ENCODE measurements at regions of chr18 and their contacts with region 1.

Region 1: DNA sequence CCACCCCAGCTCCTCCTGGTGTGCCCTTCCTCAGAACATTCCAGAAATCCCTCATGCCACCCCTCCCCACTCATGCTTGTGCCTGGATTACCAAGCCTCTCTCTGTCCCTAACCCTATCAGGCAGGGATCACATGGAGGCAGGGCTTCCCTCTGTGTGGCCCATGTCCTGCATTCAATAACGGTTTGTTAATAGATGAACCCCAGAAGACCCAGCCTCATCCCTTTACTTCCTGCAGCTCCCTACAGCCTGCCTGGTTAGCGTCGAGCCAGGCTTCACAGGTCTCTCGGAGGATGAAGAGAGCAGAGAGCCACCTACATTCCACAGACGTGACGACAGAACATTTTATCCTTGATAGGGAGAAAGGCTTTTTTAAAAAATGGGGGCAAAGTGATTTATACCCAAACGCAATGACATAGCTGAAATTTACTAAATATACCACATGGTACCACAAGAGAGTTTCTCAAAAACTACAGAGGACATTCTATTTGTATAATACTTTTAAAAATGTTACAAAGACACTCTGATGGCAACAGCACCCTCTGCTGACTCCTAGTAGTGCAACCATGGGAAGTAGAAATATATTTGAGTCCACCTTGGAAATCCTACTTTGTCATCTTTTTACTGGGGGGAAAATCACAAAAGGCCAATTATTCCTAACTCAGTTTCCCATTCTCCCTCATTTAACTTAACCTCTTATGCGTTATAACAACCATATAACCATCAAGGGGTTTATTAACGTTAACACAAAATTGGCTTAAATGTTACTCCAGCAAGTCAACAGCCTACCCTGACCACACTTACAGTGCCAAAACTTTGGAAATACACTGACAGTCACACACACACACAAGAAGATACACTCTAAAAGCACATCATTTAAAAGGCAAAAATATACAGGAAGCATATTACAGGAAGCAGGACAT is 30.7 kb downstream of the FBXO15 start:
- DNase-seq: peak in 1 of 4 experiments; percentile 29
- ATAC-seq: peak; percentile 62; the same call in 1 of the 3 replicates
- H3K4me3 ChIP-seq: no peak overlapping the region
- H3K27ac ChIP-seq: no peak overlapping the region
- H3K4me1 ChIP-seq: no peaks in the 10 kb centered on the region
- H3K27me3 ChIP-seq: peaks cover 0 to 6% of the 10 kb centered on the region in 2 experiments; a peak in 2 of 5 replicates
- CTCF ChIP-seq: peak; percentile 22 to 65 (median 39); a peak in 3 of 6 replicates
- EP300 ChIP-seq: no peak
- POLR2A ChIP-seq: no peak
- RAD21 ChIP-seq: peak; percentile 40 to 57

Region 2: GRCh38 chr18:74040459-74041332 is 76.2 kb before region 1 on chr18:
- CTCF ChIA-PET with region 1: no interaction called
- POLR2A ChIA-PET with region 1: no interaction called
- in situ Hi-C with region 1: no loop called
- intact Hi-C with region 1: loop called (anchors 2 kb)
- DNase-seq: peak; percentile 52 to 64 (median 57)
- ATAC-seq: peak; percentile 98
- H3K4me3 ChIP-seq: no peak overlapping the region
- H3K27ac ChIP-seq: no peak overlapping the region
- H3K4me1 ChIP-seq: no peaks in the 10 kb centered on the region
- H3K27me3 ChIP-seq: no peaks in the 10 kb centered on the region
- CTCF ChIP-seq: peak; percentile 63 to 69 (median 63)
- EP300 ChIP-seq: no peak
- POLR2A ChIP-seq: no peak
- RAD21 ChIP-seq: peak; percentile 42 to 55